Lower leg skin (tissue), 4 donors: ENCODE measurements at regions of chr1 and their contacts with region 1.

Region 1: GRCh38 chr1:230917284-230918135 is 49.2 kb upstream of the C1orf198 start:
- DNase-seq: peak; percentile 69 to 94
- H3K4me3 ChIP-seq: no peak overlapping the region
- CTCF ChIP-seq: no peak
- POLR2A ChIP-seq: no peak

Region 2: DNA sequence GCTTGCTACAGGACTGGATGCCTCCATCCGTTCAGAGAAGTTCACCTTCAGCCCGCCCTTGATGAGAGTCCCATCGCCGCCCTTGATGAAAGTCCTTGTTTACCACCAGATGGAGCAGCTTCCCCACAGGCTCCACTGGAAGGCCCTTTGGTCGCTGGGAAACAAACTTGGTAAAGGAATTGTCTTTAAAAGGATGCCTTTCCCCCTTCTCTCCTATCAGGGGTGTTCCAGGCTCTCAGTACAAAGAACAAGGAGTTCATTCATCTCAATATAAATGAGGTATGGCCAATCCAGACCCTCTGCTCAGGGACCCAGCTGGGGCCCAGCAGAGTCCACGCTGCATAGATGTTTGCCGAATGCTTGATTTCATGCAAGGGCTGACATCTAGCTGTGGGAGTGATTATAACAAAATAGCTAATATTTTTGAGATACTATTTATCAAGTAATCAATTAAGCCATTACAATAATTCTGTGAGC is 119.5 kb before region 1 on chr1:
- intact Hi-C with region 1: loop called (anchors 10 kb)
- DNase-seq: peak; percentile 47 to 85
- H3K4me3 ChIP-seq: no peak overlapping the region
- CTCF ChIP-seq: peak in 1 of 3 donors; percentile 67
- POLR2A ChIP-seq: no peak

Region 3: DNA sequence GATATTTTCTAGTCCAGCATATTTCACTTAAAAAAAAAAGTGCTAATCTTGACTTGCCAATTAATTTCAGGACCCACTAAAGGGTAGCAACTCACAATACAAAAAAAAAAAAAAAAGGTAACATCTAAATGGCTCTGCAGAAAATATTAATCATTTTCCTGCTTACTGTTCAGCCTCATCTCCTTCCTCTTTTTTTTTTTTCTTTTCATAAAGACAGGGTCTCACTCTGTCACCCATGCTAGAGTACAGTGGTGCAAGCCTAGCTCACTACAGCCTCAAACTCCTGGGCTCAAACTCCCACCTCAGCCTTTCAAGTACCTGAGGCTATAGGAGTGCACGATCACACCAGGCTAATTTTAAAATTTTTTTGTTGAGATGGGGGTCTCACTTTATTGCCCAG is 30.8 kb after region 1 on chr1:
- intact Hi-C with region 1: no loop called
- DNase-seq: no peak
- H3K4me3 ChIP-seq: no peak overlapping the region
- CTCF ChIP-seq: no peak
- POLR2A ChIP-seq: no peak

Region 4: DNA sequence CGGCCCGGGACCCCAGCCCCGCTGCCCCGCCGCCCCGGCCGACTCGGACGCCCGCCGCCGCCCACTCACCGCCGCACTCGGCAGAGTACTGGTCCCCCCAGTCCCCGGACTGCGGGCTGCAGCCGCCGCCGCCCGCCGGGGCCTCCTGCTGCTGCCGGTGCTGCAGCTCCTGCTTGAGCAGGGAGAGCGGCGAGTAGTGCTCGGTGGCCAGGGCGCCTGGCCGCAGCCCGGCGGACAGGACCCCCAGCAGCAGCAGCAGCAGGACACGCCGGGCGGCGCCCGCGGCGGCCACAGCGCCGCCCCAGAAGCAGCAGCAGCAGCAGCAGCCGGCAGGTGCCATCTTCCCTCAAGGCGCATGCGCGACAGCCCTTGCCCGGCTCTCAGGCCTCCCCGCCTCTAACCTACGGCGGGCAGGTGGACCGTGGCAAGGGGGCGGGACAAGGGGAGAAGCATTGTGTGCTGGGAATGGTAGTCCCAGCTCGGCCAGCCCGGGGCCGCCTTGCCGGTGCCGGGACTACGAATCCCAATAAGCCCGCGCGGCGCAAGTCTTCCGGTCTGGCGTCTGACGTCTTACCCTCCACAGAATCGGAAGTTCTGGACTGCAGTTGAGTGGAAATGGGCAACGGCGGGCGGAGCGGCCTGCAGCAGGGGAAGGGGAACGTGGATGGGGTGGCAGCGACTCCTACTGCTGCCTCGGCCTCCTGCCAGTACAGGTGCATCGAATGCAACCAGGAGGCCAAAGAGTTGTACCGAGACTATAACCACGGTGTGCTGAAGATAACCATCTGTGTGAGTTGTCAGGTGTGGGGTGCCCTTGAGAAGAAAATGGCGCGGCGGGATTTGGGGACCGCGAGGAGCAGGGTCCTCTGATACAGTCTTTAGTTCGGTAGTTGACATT is 61.2 kb after region 1 on chr1 and contains the starts of genes ARV1 and TTC13:
- intact Hi-C with region 1: no loop called
- DNase-seq: peak; percentile 97 to 99
- H3K4me3 ChIP-seq: peak within 1 kb of the TSS; percentile 91
- CTCF ChIP-seq: peak in 1 of 3 donors; percentile 40
- POLR2A ChIP-seq: no peak
- total RNA-seq, gene ARV1: 16.6 to 23.4 (median 21.9) TPM
- total RNA-seq, gene TTC13: 6.6 to 34.7 (median 24.7) TPM

Region 5: GRCh38 chr1:231206856-231207255 is 289.3 kb after region 1 on chr1:
- intact Hi-C with region 1: loop called (anchors 5 kb)
- DNase-seq: no peak
- H3K4me3 ChIP-seq: no peak overlapping the region
- CTCF ChIP-seq: no peak
- POLR2A ChIP-seq: no peak

Region 6: DNA sequence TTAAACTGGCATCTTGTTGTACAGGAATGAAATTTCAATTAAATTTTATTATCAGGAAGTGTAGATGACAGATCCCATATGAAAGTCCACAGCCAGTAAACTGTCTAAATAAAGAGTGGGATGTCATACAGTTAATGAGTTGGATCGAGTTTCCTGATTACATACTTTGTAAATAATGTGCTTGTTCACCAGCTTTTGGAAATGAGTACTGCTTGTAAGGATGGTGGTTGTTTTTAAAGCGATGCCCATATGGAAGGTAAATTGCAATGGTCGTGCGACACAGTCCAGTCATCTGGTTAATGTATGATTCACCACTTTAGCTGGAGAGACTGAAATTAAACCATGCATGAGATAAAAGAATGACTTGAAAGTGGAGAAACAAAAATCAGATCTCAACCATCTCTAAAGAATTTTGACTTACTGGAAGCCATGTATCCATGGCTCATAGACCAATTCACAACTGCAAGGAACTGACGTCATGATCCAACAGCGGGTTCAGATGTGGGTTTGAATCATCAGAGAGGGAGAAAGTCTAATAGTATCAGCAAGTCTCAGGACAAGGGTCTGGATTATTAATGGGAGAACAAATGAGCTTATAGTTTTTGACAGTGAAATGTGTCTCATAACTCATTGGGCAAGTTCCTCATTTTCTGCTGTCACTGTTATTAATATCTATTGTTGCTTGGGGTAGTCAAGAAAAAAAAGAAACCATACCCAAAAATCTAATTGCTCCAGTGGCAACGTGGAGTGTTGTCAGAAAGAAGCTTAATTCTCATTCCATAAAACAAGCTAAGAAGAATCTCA is 1936.7 kb after region 1 on chr1:
- intact Hi-C with region 1: no loop called
- DNase-seq: no peak
- H3K4me3 ChIP-seq: no peak overlapping the region
- CTCF ChIP-seq: no peak
- POLR2A ChIP-seq: no peak